Activated B cell treated with CpG ODN at 0.5 μM for 24 hours (primary cell): ENCODE measurements at regions of chr3 and their contacts with region 1.

Region 1: DNA sequence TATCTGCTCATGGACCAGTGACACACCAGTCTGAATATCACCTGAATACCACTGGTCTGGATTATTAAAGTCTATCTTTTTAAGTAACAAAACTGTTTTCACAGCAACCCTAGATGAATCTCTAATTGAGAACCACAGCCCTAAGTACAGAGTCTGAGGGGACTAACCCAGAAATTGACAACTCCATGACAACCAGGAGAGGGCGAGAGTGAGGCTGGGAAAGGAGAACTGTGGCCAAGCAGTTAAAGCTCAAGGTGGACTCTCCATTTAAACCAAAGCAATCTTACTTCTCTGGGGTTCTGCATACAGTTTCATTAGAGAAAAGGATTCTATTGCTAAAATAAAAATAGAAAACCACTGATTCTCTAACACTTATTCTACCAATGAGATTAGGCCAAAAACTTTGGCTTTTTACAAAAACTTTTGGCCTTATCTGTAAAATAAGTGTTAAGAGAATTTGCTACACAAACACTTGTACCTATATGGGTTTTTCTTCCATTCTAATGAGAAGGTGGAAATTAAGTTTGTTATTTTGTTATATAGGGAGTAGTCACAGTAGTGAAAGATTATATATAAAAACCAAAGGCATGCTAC is 11.4 kb downstream of the NEK10 start:
- DNase-seq: no peak
- ATAC-seq: peak; percentile 96
- H3K4me3 Mint-ChIP-seq: no peak overlapping the region
- H3K27ac Mint-ChIP-seq: no peak overlapping the region
- H3K4me1 Mint-ChIP-seq: peaks cover 37% of the 10 kb centered on the region
- H3K27me3 Mint-ChIP-seq: no peaks in the 10 kb centered on the region
- CTCF ChIP-seq: no peak

Region 2: DNA sequence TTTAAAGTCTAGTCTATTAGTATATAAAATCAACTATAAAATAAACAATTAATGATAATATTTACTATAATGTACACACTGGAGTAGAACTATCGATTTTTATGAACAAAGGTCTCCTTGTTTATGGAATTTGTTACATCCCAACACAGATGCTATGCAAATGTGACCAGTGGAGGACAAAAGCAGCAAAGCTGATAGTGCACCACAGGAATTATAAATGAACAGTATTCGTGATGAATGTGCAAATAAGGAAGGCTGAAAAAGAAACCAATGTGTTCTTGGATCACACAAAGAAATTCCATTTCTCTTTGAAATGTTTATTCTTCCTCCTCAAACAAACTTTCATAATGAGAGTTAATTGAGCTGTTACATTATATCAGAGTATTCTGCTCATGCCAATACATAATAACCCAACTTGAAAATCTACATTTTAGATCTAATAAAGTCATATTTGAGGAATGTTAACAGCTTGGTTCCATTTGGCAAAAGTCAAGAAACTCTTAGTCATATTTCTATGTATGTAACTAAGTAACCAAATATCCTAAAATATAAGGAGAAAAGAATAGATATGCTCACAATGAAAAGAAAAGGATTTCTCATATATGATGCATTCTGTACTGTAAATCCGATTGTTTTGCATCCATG is 67.9 kb before region 1 on chr3:
- CTCF ChIA-PET with region 1: no interaction called
- POLR2A ChIA-PET with region 1: no interaction called
- intact Hi-C with region 1: no loop called
- DNase-seq: no peak
- ATAC-seq: no peak
- H3K4me3 Mint-ChIP-seq: no peak overlapping the region
- H3K27ac Mint-ChIP-seq: no peak overlapping the region
- H3K4me1 Mint-ChIP-seq: no peaks in the 10 kb centered on the region
- H3K27me3 Mint-ChIP-seq: no peaks in the 10 kb centered on the region
- CTCF ChIP-seq: no peak

Region 3: GRCh38 chr3:27368831-27369607 is 11.3 kb after region 1 on chr3 and contains the start of gene NEK10:
- CTCF ChIA-PET with region 1: interaction called, 10 read pairs
- POLR2A ChIA-PET with region 1: interaction called, 10 read pairs
- intact Hi-C with region 1: loop called (anchors 1 kb)
- DNase-seq: peak; percentile 83
- ATAC-seq: peak; percentile 97
- H3K4me3 Mint-ChIP-seq: peak within 1 kb of the TSS; percentile 94
- H3K27ac Mint-ChIP-seq: peak within 1 kb of the TSS; percentile 65
- H3K4me1 Mint-ChIP-seq: peaks cover 15% of the 10 kb centered on the region
- H3K27me3 Mint-ChIP-seq: no peaks in the 10 kb centered on the region
- CTCF ChIP-seq: no peak
- total RNA-seq, gene NEK10: 0.59 and 0.84 TPM in 2 replicates

Region 4: DNA sequence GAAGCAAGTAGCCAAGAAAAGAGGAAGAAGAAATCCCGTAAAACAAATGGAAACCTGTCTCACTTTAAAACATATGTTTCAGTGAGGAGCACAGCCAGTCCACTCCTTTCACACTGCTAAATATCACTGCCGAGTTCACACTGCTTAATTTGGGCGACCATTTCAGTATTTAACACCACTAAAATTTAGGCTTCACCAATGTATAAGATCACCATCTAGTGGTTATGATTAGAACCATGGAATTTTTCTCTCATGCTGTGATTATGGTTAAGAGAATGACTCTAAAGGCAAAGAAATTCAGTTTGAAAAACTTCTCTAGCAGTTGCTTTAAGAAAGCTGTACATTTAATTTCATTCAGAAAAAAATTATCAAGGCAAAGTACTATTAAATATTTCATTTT is 109.8 kb after region 1 on chr3:
- CTCF ChIA-PET with region 1: interaction called, 26 read pairs
- POLR2A ChIA-PET with region 1: no interaction called
- intact Hi-C with region 1: loop called (anchors 1 kb)
- DNase-seq: no peak
- ATAC-seq: peak; percentile 88
- H3K4me3 Mint-ChIP-seq: no peak overlapping the region
- H3K27ac Mint-ChIP-seq: no peak overlapping the region
- H3K4me1 Mint-ChIP-seq: peaks cover 22% of the 10 kb centered on the region
- H3K27me3 Mint-ChIP-seq: no peaks in the 10 kb centered on the region
- CTCF ChIP-seq: no peak

Region 5: DNA sequence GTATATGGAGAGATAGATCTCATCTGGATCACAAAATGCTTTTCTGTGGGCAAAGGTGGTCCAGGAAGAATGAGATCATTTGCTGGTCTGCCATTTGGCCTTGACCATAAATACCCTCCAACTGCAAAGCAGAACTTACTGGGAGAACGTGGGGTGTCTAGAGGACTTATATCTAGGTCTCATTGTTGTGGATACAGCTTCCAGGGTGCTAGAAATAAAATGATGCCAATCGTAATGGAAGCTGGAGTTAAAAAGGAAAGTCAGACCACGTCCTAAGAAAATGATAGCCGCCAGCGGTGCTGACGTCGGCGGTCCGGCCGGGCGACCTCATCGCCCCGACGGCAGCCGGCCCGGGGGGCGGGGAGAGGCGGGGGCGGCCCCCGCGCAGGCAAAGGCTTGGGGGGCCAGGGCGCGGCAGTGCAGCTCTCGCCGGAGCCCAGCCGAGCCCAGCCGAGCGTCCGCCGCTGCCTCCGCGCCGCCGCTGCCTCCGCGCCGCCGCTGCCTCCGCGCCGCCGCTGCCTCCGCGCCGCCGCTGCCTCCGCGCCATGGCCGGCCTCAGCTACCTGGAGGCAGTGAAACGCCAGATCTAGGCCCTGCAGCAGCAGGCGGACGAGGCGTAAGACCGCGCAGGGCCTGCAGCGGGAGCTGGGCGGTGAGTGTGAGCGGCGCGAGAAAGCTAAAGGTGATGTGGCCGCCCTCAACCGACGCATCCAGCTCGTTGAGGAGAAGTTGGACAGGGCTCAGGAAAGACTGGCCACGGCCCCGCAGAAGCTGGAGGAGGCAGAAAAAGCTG is 274.9 kb after region 1 on chr3:
- CTCF ChIA-PET with region 1: no interaction called
- POLR2A ChIA-PET with region 1: no interaction called
- intact Hi-C with region 1: no loop called
- DNase-seq: peak; percentile 46
- ATAC-seq: peak; percentile 82
- H3K4me3 Mint-ChIP-seq: peak overlapping the region; percentile 90
- H3K27ac Mint-ChIP-seq: peak overlapping the region; percentile 78
- H3K4me1 Mint-ChIP-seq: peaks cover 17% of the 10 kb centered on the region
- H3K27me3 Mint-ChIP-seq: no peaks in the 10 kb centered on the region
- CTCF ChIP-seq: no peak

Region 6: DNA sequence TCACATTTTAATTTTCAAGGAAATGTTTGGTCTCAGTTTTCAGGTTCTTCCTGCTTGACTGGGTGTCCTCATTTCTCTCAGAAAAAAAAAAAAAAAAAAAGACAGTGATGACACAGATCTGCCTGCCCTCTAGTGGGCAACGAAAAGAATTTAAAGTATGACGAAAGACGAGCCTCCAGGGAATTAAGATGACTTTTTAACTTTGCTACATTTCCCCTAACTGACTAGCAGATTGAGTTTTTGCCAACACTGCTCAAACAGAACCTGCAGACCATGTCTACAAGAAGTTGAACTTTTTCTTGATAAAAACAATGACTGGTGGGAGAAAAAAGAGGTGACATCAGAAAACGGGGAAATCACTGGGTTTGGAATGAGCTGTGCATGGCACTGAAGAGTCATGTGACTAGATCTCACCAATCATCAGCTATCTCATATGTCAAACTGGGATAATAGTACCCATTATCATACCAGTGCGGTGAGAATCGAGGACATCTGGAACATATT is 323.5 kb after region 1 on chr3:
- CTCF ChIA-PET with region 1: interaction called, 12 read pairs
- POLR2A ChIA-PET with region 1: no interaction called
- intact Hi-C with region 1: loop called (anchors 1 kb)
- DNase-seq: no peak
- ATAC-seq: peak; percentile 85
- H3K4me3 Mint-ChIP-seq: peak overlapping the region; percentile 55
- H3K27ac Mint-ChIP-seq: peak overlapping the region; percentile 36
- H3K4me1 Mint-ChIP-seq: peaks cover 19% of the 10 kb centered on the region
- H3K27me3 Mint-ChIP-seq: peaks cover 3% of the 10 kb centered on the region
- CTCF ChIP-seq: no peak

Region 7: GRCh38 chr3:28328188-28329151 is 970.7 kb after region 1 on chr3:
- CTCF ChIA-PET with region 1: interaction called, 4 read pairs
- POLR2A ChIA-PET with region 1: no interaction called
- intact Hi-C with region 1: loop called (anchors 1 kb)
- DNase-seq: no peak
- ATAC-seq: peak; percentile 40
- H3K4me3 Mint-ChIP-seq: no peak overlapping the region
- H3K27ac Mint-ChIP-seq: no peak overlapping the region
- H3K4me1 Mint-ChIP-seq: no peaks in the 10 kb centered on the region
- H3K27me3 Mint-ChIP-seq: no peaks in the 10 kb centered on the region
- CTCF ChIP-seq: no peak